Thyroid gland (tissue), 4 donors: ENCODE measurements at regions of chr1 and their contacts with region 1.

Region 1: DNA sequence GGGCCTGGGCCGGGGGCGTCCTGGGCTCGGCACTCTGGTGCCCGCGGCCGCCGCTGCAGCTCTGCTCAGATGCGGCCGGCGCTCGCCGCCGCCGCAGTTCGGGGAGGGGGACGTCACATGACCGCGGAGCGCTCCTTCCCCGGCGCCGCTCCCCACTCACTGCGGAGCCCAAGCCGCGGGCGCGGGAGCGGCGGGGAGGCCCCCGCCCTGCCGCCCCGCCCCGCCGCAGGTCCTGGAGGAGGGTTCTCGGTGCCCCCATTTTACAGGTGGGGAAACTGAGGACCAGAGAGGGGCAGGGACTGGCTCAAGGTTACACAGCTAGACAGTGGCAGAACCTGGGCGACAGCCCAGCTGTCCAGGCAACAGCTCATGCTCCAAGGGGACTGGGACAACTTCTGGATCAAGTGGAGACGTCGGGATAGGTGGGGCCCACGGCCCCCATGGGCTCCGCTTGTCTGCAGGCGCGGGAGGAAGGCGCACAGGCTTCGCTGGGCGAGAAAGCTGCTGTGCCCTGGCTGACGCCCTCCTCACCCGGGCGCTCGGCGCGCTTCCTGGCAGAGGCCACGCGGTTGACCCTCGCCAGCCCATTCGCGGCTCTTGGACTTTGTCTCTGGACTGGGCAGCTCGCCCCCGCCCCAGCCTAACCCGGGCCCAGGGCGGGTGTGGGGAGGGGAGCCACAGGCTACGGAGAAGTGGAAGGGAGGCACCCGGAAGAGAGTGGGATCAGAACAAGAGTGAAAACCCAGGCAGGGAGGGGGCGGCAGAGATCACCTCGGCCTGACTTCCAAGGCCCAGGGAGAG is at the start of gene RAP1GAP:
- DNase-seq: peak; percentile 69 to 76
- H3K4me3 ChIP-seq: peak within 1 kb of the TSS; percentile 43 to 83 (median 48)
- H3K27ac ChIP-seq: peak within 1 kb of the TSS; percentile 76 to 94 (median 93)
- H3K4me1 ChIP-seq: peaks cover 81 to 90% of the 10 kb centered on the region in 2 donors
- H3K27me3 ChIP-seq: no peaks in the 10 kb centered on the region
- CTCF ChIP-seq: peak in 1 of 6 experiments; percentile 10
- POLR2A ChIP-seq: peak in 1 of 2 donors; percentile 86
- total RNA-seq, gene RAP1GAP: 256 to 588 (median 506) TPM

Region 2: DNA sequence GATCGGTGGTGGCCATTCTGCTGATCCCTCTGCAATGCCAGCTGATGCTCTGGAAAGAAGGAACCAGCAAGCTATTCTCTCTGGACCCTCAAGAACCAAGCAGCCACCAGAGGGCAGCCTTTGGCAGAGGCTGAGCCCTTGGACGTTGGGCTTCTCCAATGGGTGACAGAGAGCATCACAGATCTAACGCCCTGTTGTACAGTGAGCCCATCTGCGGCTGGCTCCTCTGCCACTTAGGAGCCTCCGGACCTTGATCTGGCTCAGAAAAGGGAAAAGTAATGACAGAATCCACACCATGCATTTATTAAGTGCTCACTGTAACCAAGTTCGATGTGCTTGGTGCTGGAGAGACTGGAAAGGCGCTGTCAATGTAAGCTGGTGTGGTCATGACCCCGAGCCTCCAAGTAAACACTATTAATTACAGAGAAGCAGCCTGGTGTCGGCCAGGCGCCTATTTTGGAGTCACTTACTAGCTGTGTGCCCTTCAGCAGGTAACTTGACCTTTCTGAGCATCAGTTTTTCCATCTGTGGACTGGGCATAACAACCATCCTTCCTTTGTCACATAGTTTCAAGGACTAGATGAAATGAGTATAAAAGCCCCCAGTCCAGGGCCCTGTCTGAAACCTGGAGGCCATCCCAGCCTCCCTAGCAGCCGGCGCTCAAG is 414.0 kb before region 1 on chr1:
- intact Hi-C with region 1: loop called (anchors 10 kb)
- DNase-seq: peak; percentile 89 to 93
- H3K4me3 ChIP-seq: no peak overlapping the region
- H3K27ac ChIP-seq: peak overlapping the region in 2 of 3 donors; percentile 15 to 53
- H3K4me1 ChIP-seq: peaks cover 14 to 18% of the 10 kb centered on the region in 2 donors
- H3K27me3 ChIP-seq: no peaks in the 10 kb centered on the region
- CTCF ChIP-seq: peak; percentile 52 to 91 (median 82)
- POLR2A ChIP-seq: no peak

Region 3: GRCh38 chr1:21782868-21783678 is 113.6 kb after region 1 on chr1 and contains the start of gene USP48:
- intact Hi-C with region 1: loop called (anchors 10 kb)
- DNase-seq: peak; percentile 97
- H3K4me3 ChIP-seq: peak within 1 kb of the TSS; percentile 53 to 97 (median 69)
- H3K27ac ChIP-seq: peak within 1 kb of the TSS; percentile 99 to 100 (median 100)
- H3K4me1 ChIP-seq: peaks cover 0 to 18% of the 10 kb centered on the region in 2 donors
- H3K27me3 ChIP-seq: no peaks in the 10 kb centered on the region
- CTCF ChIP-seq: no peak
- POLR2A ChIP-seq: peak; percentile 87 to 95
- total RNA-seq, gene USP48: 77.4 to 113 (median 88.5) TPM

Region 4: GRCh38 chr1:21956720-21957552 is 287.5 kb after region 1 on chr1:
- intact Hi-C with region 1: loop called (anchors 10 kb)
- DNase-seq: peak; percentile 91 to 95
- H3K4me3 ChIP-seq: no peak overlapping the region
- H3K27ac ChIP-seq: peak overlapping the region; percentile 28 to 76 (median 32)
- H3K4me1 ChIP-seq: peaks cover 17 to 29% of the 10 kb centered on the region in 2 donors
- H3K27me3 ChIP-seq: no peaks in the 10 kb centered on the region
- CTCF ChIP-seq: peak in 1 of 6 experiments; percentile 8
- POLR2A ChIP-seq: peak in 1 of 2 donors; percentile 12